ENCODE measurements at regions of chr1 and their contacts with region 1.

Region 1: DNA sequence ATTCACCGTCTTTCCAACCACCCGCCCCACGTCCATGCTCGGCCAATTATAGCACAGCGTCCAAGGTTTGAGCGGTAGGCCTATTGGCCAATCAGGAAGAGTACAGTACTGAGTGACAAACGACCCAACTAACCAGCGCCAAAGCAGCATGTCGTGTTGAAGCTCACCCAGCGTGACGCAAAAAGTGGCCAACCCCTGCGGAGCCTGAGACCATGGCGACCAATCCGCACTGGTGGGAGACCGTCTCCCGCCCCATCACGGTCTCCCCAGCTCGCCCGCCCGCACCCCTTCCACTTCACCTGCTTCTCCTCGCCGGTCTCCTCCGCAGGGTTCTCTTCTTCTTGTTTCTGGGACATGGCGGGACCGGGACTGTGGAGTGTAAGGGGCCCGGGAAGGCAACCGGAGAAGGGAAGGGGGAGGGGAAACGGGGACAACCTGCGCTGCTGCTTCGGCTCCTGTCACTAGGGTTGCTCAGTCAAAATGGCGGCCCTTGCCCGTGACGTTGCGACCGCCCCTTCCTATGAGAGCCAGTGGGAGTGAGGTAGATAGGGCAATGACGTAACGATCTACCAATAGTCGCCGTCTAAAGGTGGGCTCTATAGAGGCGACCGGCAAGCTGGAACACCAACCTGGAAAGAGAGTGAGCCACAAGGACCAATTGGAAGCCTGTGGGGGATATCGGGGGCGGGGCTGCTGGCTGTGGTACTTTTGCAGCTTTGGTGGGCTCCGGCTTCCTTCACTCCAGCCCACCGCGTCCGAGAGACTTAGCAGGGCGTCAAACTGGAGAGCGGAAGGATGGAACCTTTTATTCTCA is at the start of gene ENSA:
- DNase-seq: peak; percentile 100
- H3K4me3 ChIP-seq: peak within 1 kb of the TSS; percentile 89
- H3K27ac ChIP-seq: peak within 1 kb of the TSS; percentile 79
- H3K4me1 ChIP-seq: peaks cover 28% of the 10 kb centered on the region
- CTCF ChIP-seq: no peak
- total RNA-seq, gene ENSA: 97.1 and 116 TPM in 2 replicates

Region 2: DNA sequence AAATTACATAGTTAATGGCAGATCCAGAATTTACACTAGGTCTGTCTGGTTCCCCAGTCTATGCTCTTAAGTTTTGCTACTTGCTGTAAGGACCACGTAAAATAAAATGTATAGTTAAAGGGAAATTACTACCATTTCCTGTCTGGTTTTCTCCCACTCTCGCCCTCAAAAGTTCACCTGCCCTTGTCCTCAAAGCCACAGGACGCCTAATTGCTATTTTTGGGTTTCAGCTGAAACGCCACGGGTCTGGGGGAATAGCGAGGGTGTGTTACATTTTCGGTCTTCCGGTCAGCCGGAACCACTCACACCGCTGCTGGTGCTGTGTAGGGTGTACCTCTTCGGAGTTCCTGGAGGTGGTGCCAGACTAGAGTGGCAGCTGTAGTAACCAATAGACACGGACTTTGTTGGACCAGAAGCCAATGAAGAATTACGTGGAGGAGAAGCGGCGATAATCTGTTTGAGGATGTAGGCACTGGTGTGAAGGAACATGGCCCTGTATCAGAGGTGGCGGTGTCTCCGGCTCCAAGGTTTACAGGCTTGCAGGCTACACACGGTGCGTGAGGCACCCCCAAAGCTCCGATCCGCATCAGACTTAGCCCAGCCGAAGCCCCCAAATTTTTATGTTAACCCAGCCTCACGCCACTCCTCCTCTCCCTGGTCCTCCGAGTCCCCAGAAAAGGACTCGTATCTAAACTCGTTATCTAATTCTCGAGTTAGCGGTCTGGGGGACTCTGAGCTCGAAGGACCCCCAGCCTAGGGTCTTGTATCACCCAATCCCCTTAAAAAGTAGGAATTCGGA is 142.2 kb before region 1 on chr1 and contains the start of gene TARS2:
- CTCF ChIA-PET with region 1: no interaction called
- POLR2A ChIA-PET with region 1: interaction called, 4 read pairs
- intact Hi-C with region 1: loop called (anchors 10 kb)
- DNase-seq: peak; percentile 99
- H3K4me3 ChIP-seq: peak within 1 kb of the TSS; percentile 89
- H3K27ac ChIP-seq: peak within 1 kb of the TSS; percentile 50
- H3K4me1 ChIP-seq: peaks cover 18% of the 10 kb centered on the region
- CTCF ChIP-seq: no peak
- total RNA-seq, gene TARS2: 29.4 and 42.0 TPM in 2 replicates

Region 3: DNA sequence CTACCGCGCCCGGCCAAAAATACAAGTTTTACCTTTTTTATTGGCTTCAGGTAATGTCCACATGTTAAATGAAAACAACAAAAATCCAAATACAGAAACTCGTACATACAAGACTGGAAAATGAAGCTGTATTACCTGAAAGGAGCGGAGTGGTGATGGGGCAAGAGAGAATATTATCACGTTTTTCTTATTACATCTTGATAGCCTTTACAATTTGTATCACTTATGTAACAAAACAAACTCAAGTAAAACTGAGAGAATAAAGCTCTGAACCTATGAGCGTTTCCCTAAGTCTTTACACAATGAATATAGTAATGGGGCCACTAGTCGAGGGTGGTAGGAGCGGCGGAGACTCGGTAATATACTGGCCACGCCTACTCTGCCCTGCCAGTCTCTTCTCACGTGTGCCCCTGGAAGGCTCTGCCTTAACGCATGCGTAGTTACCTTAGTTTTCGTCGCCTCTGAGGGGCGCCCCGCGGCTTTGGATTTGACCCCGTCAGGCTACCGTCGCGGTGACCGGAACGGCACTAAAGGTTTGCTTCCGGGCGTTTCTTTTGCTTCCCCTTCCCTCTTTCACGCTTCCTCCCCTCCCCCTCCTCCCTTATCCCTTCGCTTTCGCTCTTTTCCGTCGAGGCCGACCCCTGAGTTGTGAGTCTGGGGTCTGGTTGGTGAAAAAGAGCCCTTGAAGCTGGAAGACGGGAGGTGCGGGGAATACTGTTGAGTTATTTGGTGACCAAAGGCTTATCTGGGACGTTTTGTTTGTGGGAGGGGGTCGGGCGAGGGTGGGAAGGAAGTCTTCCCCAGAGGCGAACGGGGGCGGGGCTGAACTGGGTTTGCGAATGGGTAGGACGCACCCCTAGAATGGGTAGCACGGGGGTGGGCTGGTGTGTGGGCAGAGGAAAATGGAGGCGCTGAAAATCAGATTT is 296.8 kb after region 1 on chr1 and contains the start of gene SETDB1:
- CTCF ChIA-PET with region 1: no interaction called
- POLR2A ChIA-PET with region 1: no interaction called
- intact Hi-C with region 1: loop called (anchors 10 kb)
- DNase-seq: peak; percentile 99
- H3K4me3 ChIP-seq: peak within 1 kb of the TSS; percentile 75
- H3K27ac ChIP-seq: peak within 1 kb of the TSS; percentile 64
- H3K4me1 ChIP-seq: peaks cover 37% of the 10 kb centered on the region
- CTCF ChIP-seq: 0 out of 2 replicates have a peak, but pooled peaks have one; percentile 35
- total RNA-seq, gene SETDB1: 42.3 and 66.8 TPM in 2 replicates